H1 (cell line): ENCODE measurements at regions of chr1 and their contacts with region 1.

Region 1: GRCh38 chr1:43573066-43573800 is 42.5 kb downstream of the PTPRF start:
- DNase-seq: no peak
- H3K4me3 ChIP-seq: no peak overlapping the region
- H3K27ac ChIP-seq: no peak overlapping the region
- H3K4me1 ChIP-seq: peaks cover 0 to 11% (median 1%) of the 10 kb centered on the region in 4 experiments; a peak in 3 of 7 replicates
- H3K27me3 ChIP-seq: no peaks in the 10 kb centered on the region
- CTCF ChIP-seq: no peak
- EP300 ChIP-seq: no peak
- POLR2A ChIP-seq: no peak
- RAD21 ChIP-seq: no peak

Region 2: DNA sequence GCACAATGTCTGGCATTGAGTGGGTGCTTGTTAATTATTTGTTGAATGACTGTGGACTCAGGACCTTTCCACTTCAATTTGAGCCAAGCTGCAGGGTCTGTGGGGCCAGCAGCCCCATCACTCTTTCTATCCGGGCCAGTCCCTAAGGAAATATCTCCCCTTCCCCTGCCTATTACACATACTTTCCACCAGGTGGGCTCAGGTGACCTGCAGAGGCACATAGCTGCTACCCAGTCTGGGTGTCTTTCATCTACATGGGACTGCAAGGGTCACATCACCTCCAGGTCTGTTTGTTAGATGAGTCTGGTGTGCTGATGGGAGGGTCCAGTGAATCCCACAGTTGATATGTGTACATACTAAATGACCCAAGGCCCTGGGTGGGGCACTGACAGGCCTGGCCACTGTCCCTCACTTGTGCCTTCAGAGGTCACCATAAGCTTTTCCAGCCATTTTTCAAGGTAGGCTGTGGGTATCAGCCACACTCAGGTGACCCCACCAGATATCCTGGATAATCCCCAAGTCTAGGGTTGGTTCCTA is 17.2 kb after region 1 on chr1:
- CTCF ChIA-PET with region 1: interaction called, 23 read pairs
- POLR2A ChIA-PET with region 1: interaction called, 12 read pairs
- DNase-seq: no peak
- H3K4me3 ChIP-seq: no peak overlapping the region
- H3K27ac ChIP-seq: no peak overlapping the region
- H3K4me1 ChIP-seq: no peaks in the 10 kb centered on the region
- H3K27me3 ChIP-seq: no peaks in the 10 kb centered on the region
- CTCF ChIP-seq: peak; percentile 53 to 78 (median 63)
- EP300 ChIP-seq: no peak
- POLR2A ChIP-seq: no peak
- RAD21 ChIP-seq: peak; percentile 64 to 69

Region 3: GRCh38 chr1:43634721-43635120 is 61.5 kb after region 1 on chr1:
- CTCF ChIA-PET with region 1: no interaction called
- POLR2A ChIA-PET with region 1: no interaction called
- DNase-seq: no peak
- H3K4me3 ChIP-seq: no peak overlapping the region
- H3K27ac ChIP-seq: no peak overlapping the region
- H3K4me1 ChIP-seq: 0 out of 7 replicates have a peak, but pooled peaks cover 0 to 4% (median 0%) of the 10 kb centered on the region in 4 experiments
- H3K27me3 ChIP-seq: no peaks in the 10 kb centered on the region; a peak in 1 of 7 replicates
- CTCF ChIP-seq: no peak
- EP300 ChIP-seq: no peak
- POLR2A ChIP-seq: no peak
- RAD21 ChIP-seq: no peak